Transverse colon (tissue), 4 donors: ENCODE measurements at regions of chr20 and their contacts with region 1.

Region 1: GRCh38 chr20:50575847-50576720 is 65.9 kb downstream of the PTPN1 start:
- DNase-seq: peak; percentile 78
- H3K4me3 ChIP-seq: no peak overlapping the region
- H3K27ac ChIP-seq: peak overlapping the region; percentile 51 to 75 (median 60)
- H3K4me1 ChIP-seq: peaks cover 9 to 43% (median 32%) of the 10 kb centered on the region in 4 donors
- H3K27me3 ChIP-seq: no peaks in the 10 kb centered on the region
- CTCF ChIP-seq: peak; percentile 69 to 79 (median 72)
- EP300 ChIP-seq: no peak
- POLR2A ChIP-seq: no peak

Region 2: DNA sequence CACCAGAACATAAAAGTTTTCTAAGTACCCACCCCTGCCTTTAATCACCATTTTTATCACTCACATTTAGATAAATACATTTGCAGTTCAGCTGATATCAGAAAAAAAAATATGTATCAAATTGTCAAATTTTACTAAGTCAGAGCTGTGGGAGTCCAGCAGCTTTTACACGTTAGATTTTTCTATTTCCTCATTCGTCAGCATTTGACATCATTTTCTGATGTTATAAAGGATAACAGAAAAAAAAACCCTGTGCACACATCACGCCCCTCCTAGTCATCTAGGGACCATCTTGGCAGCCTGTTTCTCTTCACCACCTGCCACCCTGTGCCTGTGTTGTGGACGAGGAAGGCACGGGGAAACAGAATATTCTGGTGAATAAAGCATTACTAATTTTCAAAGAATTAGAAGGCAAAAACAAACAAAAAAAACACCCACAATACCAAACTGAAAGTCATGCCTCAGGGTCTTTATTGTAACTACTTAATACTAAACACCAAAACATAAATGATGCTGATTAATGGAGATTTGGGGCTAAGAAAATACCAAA is 874.8 kb before region 1 on chr20:
- in situ Hi-C with region 1: no loop called
- intact Hi-C with region 1: no loop called
- DNase-seq: no peak
- H3K4me3 ChIP-seq: no peak overlapping the region
- H3K27ac ChIP-seq: peak overlapping the region in 1 of 4 donors; percentile 29
- H3K4me1 ChIP-seq: peaks cover 15 to 76% (median 52%) of the 10 kb centered on the region in 4 donors
- H3K27me3 ChIP-seq: no peaks in the 10 kb centered on the region
- CTCF ChIP-seq: no peak
- EP300 ChIP-seq: no peak
- POLR2A ChIP-seq: no peak

Region 3: DNA sequence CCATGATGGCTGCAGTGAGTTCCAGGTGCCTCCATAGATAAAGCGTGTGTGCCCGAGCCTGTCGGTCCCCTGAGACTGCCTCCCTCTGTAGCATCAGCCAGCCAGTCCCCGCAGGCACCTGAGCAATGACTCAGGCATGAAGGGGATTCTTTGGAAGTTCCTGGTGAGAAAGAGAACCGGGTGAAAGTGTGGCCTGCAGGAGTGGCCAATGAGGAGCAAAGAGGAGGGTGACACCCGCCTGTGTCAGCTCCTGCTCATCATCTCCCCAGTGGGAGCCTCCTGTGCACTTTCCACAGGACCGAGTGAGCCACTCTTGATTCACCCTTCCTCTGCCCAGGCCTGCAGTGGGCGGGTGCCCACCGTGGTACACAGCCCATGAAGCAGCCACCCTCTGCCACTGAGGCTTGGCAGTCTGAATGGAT is 137.1 kb before region 1 on chr20:
- in situ Hi-C with region 1: no loop called
- intact Hi-C with region 1: no loop called
- DNase-seq: no peak
- H3K4me3 ChIP-seq: no peak overlapping the region
- H3K27ac ChIP-seq: peak overlapping the region in 2 of 4 donors; percentile 62 to 69
- H3K4me1 ChIP-seq: peaks cover 3 to 22% (median 7%) of the 10 kb centered on the region in 4 donors
- H3K27me3 ChIP-seq: no peaks in the 10 kb centered on the region
- CTCF ChIP-seq: no peak
- EP300 ChIP-seq: no peak
- POLR2A ChIP-seq: no peak

Region 4: DNA sequence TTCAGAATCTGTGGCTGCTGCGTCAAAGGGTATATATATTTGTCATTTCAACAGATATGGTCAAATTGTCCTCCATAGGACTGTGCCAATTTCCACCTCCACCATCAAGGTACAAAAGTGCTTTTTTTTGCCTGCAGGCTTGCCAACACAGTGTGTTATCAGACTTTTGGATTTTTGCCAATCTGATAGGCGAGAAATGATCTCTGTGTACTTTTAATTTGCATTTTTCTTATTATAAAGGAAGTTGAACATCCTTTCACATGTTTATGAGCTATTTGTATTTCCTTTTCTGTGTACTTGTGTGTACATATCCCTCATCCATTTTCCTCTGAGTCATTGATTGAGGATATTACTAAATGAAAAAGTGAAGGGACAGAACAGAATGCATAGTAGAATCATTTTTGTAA is 104.9 kb before region 1 on chr20:
- in situ Hi-C with region 1: loop called (anchors 5 to 10 kb)
- intact Hi-C with region 1: no loop called
- DNase-seq: no peak
- H3K4me3 ChIP-seq: no peak overlapping the region
- H3K27ac ChIP-seq: peak overlapping the region in 1 of 4 donors; percentile 29
- H3K4me1 ChIP-seq: peaks cover 0 to 22% (median 8%) of the 10 kb centered on the region in 4 donors
- H3K27me3 ChIP-seq: no peaks in the 10 kb centered on the region
- CTCF ChIP-seq: no peak
- EP300 ChIP-seq: no peak
- POLR2A ChIP-seq: no peak

Region 5: DNA sequence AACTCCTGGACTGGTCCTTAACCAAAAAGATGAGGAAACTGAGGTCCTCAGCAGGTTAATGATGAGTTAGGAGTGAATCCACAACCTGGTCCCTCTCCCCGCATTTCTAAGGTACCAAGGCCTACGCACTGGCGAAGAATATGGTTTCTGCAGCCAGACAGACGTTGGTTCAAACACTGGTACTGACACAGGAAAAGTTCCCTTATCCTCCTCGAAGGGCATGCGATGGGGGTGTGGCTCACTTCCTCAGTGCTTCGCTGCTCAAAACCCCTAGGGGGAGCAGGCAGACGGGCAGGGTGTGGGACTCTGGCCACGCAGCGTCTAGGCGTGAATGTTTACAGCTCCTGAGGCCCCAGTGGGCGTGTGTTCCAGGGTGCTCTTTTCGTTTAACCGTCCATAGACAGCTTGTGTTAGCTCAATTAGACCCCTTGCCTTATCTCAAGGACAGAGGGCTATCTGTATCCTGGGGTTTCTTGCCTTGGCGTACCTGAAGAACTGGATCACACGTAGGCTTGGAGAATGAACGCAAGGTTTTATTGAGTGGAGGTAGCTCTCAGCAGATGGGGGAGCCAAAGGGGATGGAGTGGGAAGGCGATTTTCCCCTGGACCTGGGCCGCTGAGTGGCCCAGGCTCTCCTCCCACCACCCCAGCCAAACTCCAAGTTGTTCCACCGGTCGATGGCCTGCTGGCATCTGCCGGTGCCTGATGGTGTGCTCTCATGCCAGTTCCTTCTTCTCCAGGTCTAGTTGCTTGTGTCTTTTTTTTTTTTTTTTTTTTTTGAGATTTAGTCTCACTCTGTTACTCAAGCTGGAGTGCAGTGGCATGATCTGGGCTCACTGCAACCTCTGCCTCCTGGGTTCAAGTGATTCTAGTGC is 97.7 kb before region 1 on chr20:
- in situ Hi-C with region 1: loop called (anchors 5 to 10 kb)
- intact Hi-C with region 1: loop called (anchors 5 kb)
- DNase-seq: peak; percentile 81
- H3K4me3 ChIP-seq: no peak overlapping the region
- H3K27ac ChIP-seq: peak overlapping the region in 1 of 4 donors; percentile 39
- H3K4me1 ChIP-seq: peaks cover 4 to 26% (median 15%) of the 10 kb centered on the region in 4 donors
- H3K27me3 ChIP-seq: no peaks in the 10 kb centered on the region
- CTCF ChIP-seq: peak; percentile 59 to 84 (median 72)
- EP300 ChIP-seq: no peak
- POLR2A ChIP-seq: no peak

Region 6: GRCh38 chr20:50484276-50484976 is 91.7 kb before region 1 on chr20:
- in situ Hi-C with region 1: loop called in 2 of 4 experiments (anchors 5 to 10 kb)
- intact Hi-C with region 1: loop called (anchors 5 kb)
- DNase-seq: no peak
- H3K4me3 ChIP-seq: no peak overlapping the region
- H3K27ac ChIP-seq: peak overlapping the region; percentile 80 to 86 (median 84)
- H3K4me1 ChIP-seq: peaks cover 5 to 16% (median 10%) of the 10 kb centered on the region in 4 donors
- H3K27me3 ChIP-seq: no peaks in the 10 kb centered on the region
- CTCF ChIP-seq: no peak
- EP300 ChIP-seq: no peak
- POLR2A ChIP-seq: no peak

Region 7: DNA sequence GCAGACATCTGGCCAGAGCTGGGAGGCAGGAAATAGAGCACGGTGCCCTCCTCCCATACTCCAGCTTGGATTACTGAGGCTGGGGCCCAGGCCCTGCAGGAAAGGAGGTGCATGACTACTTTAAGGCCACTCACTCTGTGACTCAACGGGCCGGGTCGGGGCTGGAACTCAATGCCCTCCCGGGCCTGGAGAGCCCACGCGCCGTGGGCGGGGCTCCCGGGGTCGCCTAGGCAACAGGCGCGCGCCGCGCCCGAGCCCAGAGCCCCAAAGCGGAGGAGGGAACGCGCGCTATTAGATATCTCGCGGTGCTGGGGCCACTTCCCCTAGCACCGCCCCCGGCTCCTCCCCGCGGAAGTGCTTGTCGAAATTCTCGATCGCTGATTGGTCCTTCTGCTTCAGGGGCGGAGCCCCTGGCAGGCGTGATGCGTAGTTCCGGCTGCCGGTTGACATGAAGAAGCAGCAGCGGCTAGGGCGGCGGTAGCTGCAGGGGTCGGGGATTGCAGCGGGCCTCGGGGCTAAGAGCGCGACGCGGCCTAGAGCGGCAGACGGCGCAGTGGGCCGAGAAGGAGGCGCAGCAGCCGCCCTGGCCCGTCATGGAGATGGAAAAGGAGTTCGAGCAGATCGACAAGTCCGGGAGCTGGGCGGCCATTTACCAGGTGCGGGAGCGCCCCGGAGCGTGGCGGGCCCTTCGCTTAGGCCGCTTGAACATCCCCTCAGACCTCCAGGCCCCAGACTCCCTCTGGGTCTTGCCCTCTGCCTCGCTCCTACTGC is 66.0 kb before region 1 on chr20 and contains the start of gene PTPN1:
- in situ Hi-C with region 1: loop called in 1 of 4 experiments (anchors 5 kb)
- intact Hi-C with region 1: no loop called
- DNase-seq: peak; percentile 99
- H3K4me3 ChIP-seq: peak within 1 kb of the TSS; percentile 91 to 96 (median 94)
- H3K27ac ChIP-seq: peak within 1 kb of the TSS; percentile 91 to 96 (median 93)
- H3K4me1 ChIP-seq: peaks cover 26 to 48% (median 44%) of the 10 kb centered on the region in 4 donors
- H3K27me3 ChIP-seq: no peaks in the 10 kb centered on the region
- CTCF ChIP-seq: peak; percentile 2 to 45 (median 23)
- EP300 ChIP-seq: no peak
- POLR2A ChIP-seq: peak; percentile 99
- total RNA-seq, gene PTPN1: 19.3 to 34.8 (median 28.8) TPM

Region 8: DNA sequence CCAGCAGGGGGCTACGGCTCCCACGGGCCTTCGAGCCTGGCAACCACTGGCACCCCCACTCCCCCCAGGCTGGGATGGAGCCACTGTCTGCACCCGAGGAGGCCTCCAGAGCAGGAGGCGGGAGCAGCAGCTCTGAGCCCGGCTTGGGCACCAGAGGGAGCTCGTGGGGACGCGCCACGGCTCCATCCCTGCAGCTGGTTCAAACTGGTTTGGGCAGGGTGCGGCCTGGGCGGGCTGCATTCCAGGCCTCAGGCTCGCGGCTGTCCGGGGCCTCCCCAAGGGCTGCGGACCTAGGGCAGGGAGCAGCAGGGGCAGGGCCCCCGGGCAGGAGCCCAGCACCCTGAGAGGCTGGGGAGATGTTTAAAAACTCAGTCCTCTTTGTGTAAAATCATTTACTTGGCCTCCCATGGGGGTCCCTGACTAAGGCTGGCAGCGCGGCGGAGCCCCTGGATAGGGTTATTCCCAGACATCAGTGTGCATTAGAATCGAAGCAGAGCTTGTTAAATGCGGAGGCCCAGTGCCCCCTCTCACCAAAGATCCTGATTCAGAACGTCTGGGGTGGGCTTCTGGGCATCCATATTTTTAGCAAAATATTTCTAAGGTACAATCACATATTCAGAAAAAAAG is 214.7 kb after region 1 on chr20:
- in situ Hi-C with region 1: no loop called
- intact Hi-C with region 1: no loop called
- DNase-seq: peak; percentile 94
- H3K4me3 ChIP-seq: peak overlapping the region in 1 of 4 donors; percentile 3
- H3K27ac ChIP-seq: peak overlapping the region; percentile 75 to 84 (median 81)
- H3K4me1 ChIP-seq: peaks cover 16 to 36% (median 27%) of the 10 kb centered on the region in 4 donors
- H3K27me3 ChIP-seq: no peaks in the 10 kb centered on the region
- CTCF ChIP-seq: peak; percentile 62 to 85 (median 71)
- EP300 ChIP-seq: peak; percentile 58
- POLR2A ChIP-seq: peak; percentile 41